Left ventricle myocardium superior (tissue), 1 donor: ENCODE measurements at regions of chr1 and their contacts with region 1.

Region 1: DNA sequence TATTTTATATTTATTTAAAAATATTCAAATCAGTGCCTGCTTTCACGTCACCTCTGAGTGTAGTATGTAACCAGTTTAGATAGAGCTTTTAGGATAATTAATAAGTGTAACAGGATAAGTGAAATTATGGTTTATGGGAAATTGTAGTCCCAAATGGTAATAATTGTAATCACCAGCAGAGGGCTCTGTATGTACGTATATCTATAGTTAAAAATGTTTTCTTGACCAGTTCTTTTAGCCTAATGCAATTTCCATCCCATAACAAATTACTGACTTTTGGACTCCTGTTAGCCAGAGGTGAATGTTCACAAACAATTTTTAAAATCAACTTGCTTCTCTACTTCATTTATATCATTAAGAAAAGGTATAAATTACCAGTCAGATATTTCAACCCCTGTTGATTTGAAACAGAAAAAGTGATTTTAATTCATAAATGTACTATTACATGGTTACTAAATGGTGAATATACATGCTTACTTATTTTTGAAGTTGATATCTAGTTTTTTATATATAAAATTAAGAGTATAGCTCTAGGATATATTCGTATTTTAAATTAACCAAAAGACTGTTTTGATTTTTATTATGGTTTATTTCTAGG is 25.3 kb downstream of the SLC30A7 start:
- DNase-seq: no peak
- ATAC-seq: no peak

Region 2: GRCh38 chr1:101291562-101292380 is 370.6 kb after region 1 on chr1:
- intact Hi-C with region 1: loop called (anchors 5 kb)
- DNase-seq: no peak
- ATAC-seq: peak; percentile 57